ENCODE measurements at regions of chr7 and their contacts with region 1.

Region 1: GRCh38 chr7:117230276-117231046 is 92.4 kb downstream of the WNT2 start:
- DNase-seq: peak; percentile 95
- ATAC-seq: peak; percentile 78
- H3K4me3 ChIP-seq: no peak overlapping the region
- H3K27ac ChIP-seq: peak overlapping the region; percentile 98
- H3K4me1 ChIP-seq: peaks cover 20% of the 10 kb centered on the region
- H3K27me3 ChIP-seq: no peaks in the 10 kb centered on the region
- CTCF ChIP-seq: no peak
- POLR2A ChIP-seq: no peak
- RAD21 ChIP-seq: no peak

Region 2: DNA sequence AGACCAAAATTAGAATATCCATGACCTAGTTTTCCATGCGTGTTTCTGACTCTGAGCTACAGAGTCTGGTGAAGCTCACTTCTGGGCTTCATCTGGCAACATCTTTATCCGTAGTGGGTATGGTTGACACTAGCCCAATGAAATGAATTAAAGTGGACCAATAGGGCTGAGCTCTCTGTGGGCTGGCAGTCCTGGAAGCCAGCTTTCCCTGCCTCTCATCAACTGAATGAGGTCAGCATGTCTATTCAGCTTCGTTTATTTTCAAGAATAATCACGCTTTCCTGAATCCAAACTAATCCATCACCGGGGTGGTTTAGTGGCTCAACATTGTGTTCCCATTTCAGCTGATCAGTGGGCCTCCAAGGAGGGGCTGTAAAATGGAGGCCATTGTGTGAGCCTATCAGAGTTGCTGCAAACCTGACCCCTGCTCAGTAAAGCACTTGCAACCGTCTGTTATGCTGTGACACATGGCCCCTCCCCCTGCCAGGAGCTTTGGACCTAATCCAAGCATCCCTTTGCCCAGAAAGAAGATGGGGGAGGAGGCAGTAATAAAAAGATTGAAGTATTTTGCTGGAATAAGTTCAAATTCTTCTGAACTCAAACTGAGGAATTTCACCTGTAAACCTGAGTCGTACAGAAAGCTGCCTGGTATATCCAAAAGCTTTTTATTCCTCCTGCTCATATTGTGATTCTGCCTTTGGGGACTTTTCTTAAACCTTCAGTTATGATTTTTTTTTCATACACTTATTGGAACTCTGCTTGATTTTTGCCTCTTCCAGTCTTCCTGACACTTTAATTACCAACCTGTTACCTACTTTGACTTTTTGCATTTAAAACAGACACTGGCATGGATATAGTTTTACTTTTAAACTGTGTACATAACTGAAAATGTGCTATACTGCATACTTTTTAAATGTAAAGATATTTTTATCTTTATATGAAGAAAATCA is 670.2 kb before region 1 on chr7:
- CTCF ChIA-PET with region 1: no interaction called
- POLR2A ChIA-PET with region 1: no interaction called
- dilution Hi-C with region 1: no loop called
- in situ Hi-C with region 1: no loop called
- intact Hi-C with region 1: no loop called
- DNase-seq: no peak
- ATAC-seq: no peak
- H3K4me3 ChIP-seq: no peak overlapping the region
- H3K27ac ChIP-seq: no peak overlapping the region
- H3K4me1 ChIP-seq: peaks cover 4% of the 10 kb centered on the region; the same call in 1 of the 2 replicates
- H3K27me3 ChIP-seq: no peaks in the 10 kb centered on the region
- CTCF ChIP-seq: no peak
- POLR2A ChIP-seq: no peak
- RAD21 ChIP-seq: no peak

Region 3: DNA sequence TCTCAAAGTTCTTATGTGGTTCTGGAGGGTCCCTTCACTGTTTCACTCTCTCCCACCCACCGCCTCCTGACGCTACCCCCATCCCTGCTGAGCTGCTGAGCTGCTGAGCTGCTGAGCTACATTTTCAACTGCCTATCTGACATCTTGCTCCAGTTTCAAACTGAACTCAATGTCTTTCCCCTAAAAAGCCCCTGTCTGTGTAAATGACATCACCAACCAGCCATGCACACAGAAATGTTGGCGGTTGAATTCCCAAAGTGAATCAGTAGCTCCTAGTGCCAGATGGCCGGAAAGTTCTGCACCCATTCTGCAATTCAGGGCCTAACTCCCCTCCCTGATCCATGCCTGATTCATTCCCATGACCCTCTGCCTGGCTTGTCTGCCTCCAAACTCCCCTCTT is 21.2 kb after region 1 on chr7:
- CTCF ChIA-PET with region 1: interaction called, 3 read pairs
- POLR2A ChIA-PET with region 1: no interaction called
- dilution Hi-C with region 1: no loop called
- in situ Hi-C with region 1: no loop called
- intact Hi-C with region 1: loop called (anchors 2 kb)
- DNase-seq: peak; percentile 91
- ATAC-seq: peak; percentile 21; the same call in 1 of the 2 replicates
- H3K4me3 ChIP-seq: no peak overlapping the region
- H3K27ac ChIP-seq: peak overlapping the region; percentile 62; the same call in 1 of the 2 replicates
- H3K4me1 ChIP-seq: peaks cover 26% of the 10 kb centered on the region
- H3K27me3 ChIP-seq: no peaks in the 10 kb centered on the region
- CTCF ChIP-seq: no peak
- POLR2A ChIP-seq: no peak
- RAD21 ChIP-seq: no peak

Region 4: DNA sequence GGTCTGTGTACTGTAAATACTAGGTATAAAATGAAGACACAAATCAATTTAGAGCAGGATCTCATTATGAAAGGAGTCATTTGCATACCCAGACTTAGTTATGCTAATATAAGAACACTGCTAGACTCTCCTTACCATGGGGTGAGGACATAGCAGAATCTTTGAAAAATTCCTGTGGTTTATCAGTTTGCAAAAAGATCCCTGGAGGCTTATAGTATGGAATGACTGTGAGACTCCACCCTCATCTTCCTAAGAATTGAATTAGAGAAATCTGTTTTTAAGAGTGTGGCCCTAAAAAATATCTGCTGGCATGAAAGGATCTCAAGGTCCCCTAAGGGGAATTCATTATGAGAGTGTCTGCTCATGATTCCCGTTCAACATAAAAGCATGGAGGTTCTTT is 29.2 kb after region 1 on chr7:
- CTCF ChIA-PET with region 1: no interaction called
- POLR2A ChIA-PET with region 1: no interaction called
- dilution Hi-C with region 1: no loop called
- in situ Hi-C with region 1: no loop called
- intact Hi-C with region 1: loop called (anchors 5 kb)
- DNase-seq: peak; percentile 53
- ATAC-seq: peak; percentile 99
- H3K4me3 ChIP-seq: no peak overlapping the region
- H3K27ac ChIP-seq: peak overlapping the region; percentile 57; the same call in 1 of the 2 replicates
- H3K4me1 ChIP-seq: peaks cover 11% of the 10 kb centered on the region
- H3K27me3 ChIP-seq: no peaks in the 10 kb centered on the region
- CTCF ChIP-seq: no peak
- POLR2A ChIP-seq: no peak
- RAD21 ChIP-seq: no peak

Region 5: GRCh38 chr7:117277576-117277975 is 47.1 kb after region 1 on chr7:
- CTCF ChIA-PET with region 1: no interaction called
- POLR2A ChIA-PET with region 1: no interaction called
- dilution Hi-C with region 1: no loop called
- in situ Hi-C with region 1: no loop called
- intact Hi-C with region 1: no loop called
- DNase-seq: no peak
- ATAC-seq: no peak
- H3K4me3 ChIP-seq: no peak overlapping the region
- H3K27ac ChIP-seq: no peak overlapping the region
- H3K4me1 ChIP-seq: peaks cover 7% of the 10 kb centered on the region
- H3K27me3 ChIP-seq: no peaks in the 10 kb centered on the region
- CTCF ChIP-seq: no peak
- POLR2A ChIP-seq: no peak
- RAD21 ChIP-seq: no peak